Panc1 (cell line): ENCODE measurements at regions of chr6 and their contacts with region 1.

Region 1: DNA sequence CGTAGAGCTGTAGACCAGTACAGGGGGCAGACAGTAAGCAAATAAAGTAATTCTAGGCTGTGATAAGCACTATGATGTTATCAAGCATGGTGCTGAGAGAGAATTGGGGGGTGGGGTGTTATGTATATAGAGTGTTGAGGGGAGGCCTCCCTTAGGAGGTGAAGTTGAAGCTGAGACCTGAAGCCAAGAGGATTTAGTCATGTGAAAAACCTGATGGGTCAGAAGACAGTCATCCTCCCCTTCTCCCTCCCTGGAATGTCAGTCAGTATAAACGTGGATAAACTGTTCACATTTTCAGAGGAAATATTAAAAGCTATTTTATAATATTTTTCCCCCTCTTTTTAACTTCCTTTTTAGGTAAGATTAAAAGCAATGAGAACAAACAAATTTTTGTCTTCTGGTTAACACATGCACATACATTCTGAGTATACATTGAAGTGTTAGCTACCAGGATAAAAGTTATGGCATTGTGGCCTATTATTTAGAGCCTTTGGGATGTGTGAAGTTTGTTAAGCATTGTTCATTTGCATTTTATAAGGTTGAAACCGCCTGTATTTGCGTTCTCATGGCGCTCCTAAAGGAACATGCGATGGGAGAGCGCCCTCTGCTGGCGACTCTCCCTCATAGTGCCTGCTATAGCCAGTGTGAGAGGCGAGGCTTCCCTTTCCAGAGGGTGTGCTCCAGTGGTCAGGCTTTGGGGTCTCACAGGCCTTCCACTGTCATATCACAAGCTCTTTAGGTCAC is 35.4 kb upstream of the MAPK13 start:
- DNase-seq: peak; percentile 42
- ATAC-seq: peak; percentile 98
- H3K4me3 ChIP-seq: no peak overlapping the region
- H3K27ac ChIP-seq: no peak overlapping the region
- H3K4me1 ChIP-seq: peaks cover 3% of the 10 kb centered on the region; the same call in 1 of the 2 replicates
- H3K27me3 ChIP-seq: no peaks in the 10 kb centered on the region
- CTCF ChIP-seq: peak; percentile 96

Region 2: GRCh38 chr6:35833536-35833935 is 261.4 kb before region 1 on chr6:
- CTCF ChIA-PET with region 1: interaction called, 11 read pairs
- POLR2A ChIA-PET with region 1: no interaction called
- in situ Hi-C with region 1: no loop called
- intact Hi-C with region 1: no loop called
- DNase-seq: no peak
- ATAC-seq: no peak
- H3K4me3 ChIP-seq: no peak overlapping the region
- H3K27ac ChIP-seq: no peak overlapping the region
- H3K4me1 ChIP-seq: no peaks in the 10 kb centered on the region
- H3K27me3 ChIP-seq: no peaks in the 10 kb centered on the region
- CTCF ChIP-seq: no peak

Region 3: GRCh38 chr6:35973670-35974222 is 121.2 kb before region 1 on chr6:
- CTCF ChIA-PET with region 1: no interaction called
- POLR2A ChIA-PET with region 1: interaction called, 10 read pairs
- in situ Hi-C with region 1: no loop called
- intact Hi-C with region 1: no loop called
- DNase-seq: no peak
- ATAC-seq: no peak
- H3K4me3 ChIP-seq: no peak overlapping the region
- H3K27ac ChIP-seq: no peak overlapping the region
- H3K4me1 ChIP-seq: no peaks in the 10 kb centered on the region
- H3K27me3 ChIP-seq: no peaks in the 10 kb centered on the region
- CTCF ChIP-seq: no peak

Region 4: DNA sequence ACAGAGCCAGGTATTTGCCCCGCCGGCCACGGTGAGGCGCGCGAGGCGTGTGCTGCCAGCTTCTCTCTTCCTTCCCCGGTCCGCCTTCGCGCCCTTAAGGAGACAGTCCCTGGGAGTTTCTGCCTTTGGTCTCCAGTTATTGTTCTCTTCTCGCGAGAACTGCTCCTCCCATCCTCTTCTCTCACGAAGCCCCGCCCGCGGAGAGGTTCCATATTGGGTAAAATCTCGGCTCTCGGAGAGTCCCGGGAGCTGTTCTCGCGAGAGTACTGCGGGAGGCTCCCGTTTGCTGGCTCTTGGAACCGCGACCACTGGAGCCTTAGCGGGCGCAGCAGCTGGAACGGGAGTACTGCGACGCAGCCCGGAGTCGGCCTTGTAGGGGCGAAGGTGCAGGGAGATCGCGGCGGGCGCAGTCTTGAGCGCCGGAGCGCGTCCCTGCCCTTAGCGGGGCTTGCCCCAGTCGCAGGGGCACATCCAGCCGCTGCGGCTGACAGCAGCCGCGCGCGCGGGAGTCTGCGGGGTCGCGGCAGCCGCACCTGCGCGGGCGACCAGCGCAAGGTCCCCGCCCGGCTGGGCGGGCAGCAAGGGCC is 67.3 kb before region 1 on chr6 and contains the start of gene MAPK14:
- CTCF ChIA-PET with region 1: interaction called, 4 read pairs
- POLR2A ChIA-PET with region 1: interaction called, 3 read pairs
- in situ Hi-C with region 1: no loop called
- intact Hi-C with region 1: loop called (anchors 2 kb)
- DNase-seq: peak; percentile 98
- ATAC-seq: peak; percentile 95
- H3K4me3 ChIP-seq: peak within 1 kb of the TSS; percentile 88 to 91
- H3K27ac ChIP-seq: peak within 1 kb of the TSS; percentile 91
- H3K4me1 ChIP-seq: peaks cover 15% of the 10 kb centered on the region
- H3K27me3 ChIP-seq: no peaks in the 10 kb centered on the region
- CTCF ChIP-seq: peak; percentile 96
- total RNA-seq, gene MAPK14: 42.3 TPM